Panc1 (cell line): ENCODE measurements at regions of chr12 and their contacts with region 1.

Region 1: GRCh38 chr12:55696796-55697462 is 10.8 kb downstream of the ITGA7 start:
- DNase-seq: no peak
- ATAC-seq: no peak
- H3K4me3 ChIP-seq: no peak overlapping the region
- H3K27ac ChIP-seq: no peak overlapping the region
- H3K4me1 ChIP-seq: no peaks in the 10 kb centered on the region
- H3K27me3 ChIP-seq: no peaks in the 10 kb centered on the region
- CTCF ChIP-seq: no peak

Region 2: GRCh38 chr12:55548756-55549155 is 148.2 kb before region 1 on chr12:
- CTCF ChIA-PET with region 1: no interaction called
- POLR2A ChIA-PET with region 1: no interaction called
- in situ Hi-C with region 1: no loop called
- intact Hi-C with region 1: no loop called
- DNase-seq: no peak
- ATAC-seq: no peak
- H3K4me3 ChIP-seq: no peak overlapping the region
- H3K27ac ChIP-seq: no peak overlapping the region
- H3K4me1 ChIP-seq: no peaks in the 10 kb centered on the region
- H3K27me3 ChIP-seq: no peaks in the 10 kb centered on the region
- CTCF ChIP-seq: no peak

Region 3: DNA sequence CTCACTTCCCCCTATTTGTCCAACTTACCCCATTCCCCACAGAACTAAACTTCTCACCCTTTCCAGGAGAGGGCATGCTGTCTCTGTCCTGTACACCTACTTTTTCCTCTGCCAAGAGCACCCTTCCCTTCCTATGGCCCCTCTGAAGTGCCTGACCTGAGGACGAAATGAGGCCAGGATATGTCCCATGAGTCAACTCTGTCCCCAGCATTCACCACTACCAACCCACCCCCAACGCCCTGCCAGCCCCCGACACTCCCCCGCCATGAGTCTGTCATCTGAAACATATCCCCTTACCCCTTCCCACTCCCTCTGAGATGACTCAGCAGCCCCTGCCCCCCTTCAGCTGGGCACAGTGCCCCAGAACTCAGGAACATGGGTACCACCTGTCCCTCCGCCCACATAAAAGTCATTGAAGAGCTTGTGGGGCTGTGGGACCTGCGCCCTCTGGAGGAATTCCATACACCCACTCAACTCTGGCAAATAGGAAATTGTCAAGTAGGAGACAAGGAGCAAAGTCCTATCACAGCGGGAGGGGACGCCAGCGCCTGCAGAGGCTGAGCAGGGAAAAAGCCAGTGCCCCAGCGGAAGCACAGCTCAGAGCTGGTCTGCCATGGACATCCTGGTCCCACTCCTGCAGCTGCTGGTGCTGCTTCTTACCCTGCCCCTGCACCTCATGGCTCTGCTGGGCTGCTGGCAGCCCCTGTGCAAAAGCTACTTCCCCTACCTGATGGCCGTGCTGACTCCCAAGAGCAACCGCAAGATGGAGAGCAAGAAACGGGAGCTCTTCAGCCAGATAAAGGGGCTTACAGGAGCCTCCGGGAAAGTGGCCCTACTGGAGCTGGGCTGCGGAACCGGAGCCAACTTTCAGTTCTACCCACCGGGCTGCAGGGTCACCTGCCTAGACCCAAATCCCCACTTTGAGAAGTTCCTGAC is 15.5 kb before region 1 on chr12:
- CTCF ChIA-PET with region 1: interaction called, 11 read pairs
- POLR2A ChIA-PET with region 1: no interaction called
- in situ Hi-C with region 1: no loop called
- intact Hi-C with region 1: no loop called
- DNase-seq: no peak
- ATAC-seq: peak; percentile 94
- H3K4me3 ChIP-seq: peak overlapping the region; percentile 38 to 64
- H3K27ac ChIP-seq: 0 out of 2 replicates have a peak overlapping the region, but pooled peaks have one; percentile 18
- H3K4me1 ChIP-seq: peaks cover 5% of the 10 kb centered on the region; the same call in 1 of the 2 replicates
- H3K27me3 ChIP-seq: peaks cover 2% of the 10 kb centered on the region; the same call in 1 of the 2 replicates
- CTCF ChIP-seq: peak; percentile 81